Naive thymus-derived CD4-positive, alpha-beta T cell (primary cell): ENCODE measurements at regions of chr6 and their contacts with region 1.

Region 1: GRCh38 chr6:54717849-54718455 is 128.6 kb upstream of the FAM83B start:
- DNase-seq: peak in 6 of 9 donors; percentile 4 to 37 (median 18)
- ATAC-seq: peak; percentile 68
- H3K4me3 ChIP-seq: no peak overlapping the region
- H3K4me3 Mint-ChIP-seq: no peak overlapping the region
- H3K27ac ChIP-seq: no peak overlapping the region
- H3K27ac Mint-ChIP-seq: no peak overlapping the region
- H3K4me1 ChIP-seq: no peaks in the 10 kb centered on the region
- H3K4me1 Mint-ChIP-seq: no peaks in the 10 kb centered on the region
- H3K27me3 ChIP-seq: no peaks in the 10 kb centered on the region
- H3K27me3 Mint-ChIP-seq: no peaks in the 10 kb centered on the region

Region 2: DNA sequence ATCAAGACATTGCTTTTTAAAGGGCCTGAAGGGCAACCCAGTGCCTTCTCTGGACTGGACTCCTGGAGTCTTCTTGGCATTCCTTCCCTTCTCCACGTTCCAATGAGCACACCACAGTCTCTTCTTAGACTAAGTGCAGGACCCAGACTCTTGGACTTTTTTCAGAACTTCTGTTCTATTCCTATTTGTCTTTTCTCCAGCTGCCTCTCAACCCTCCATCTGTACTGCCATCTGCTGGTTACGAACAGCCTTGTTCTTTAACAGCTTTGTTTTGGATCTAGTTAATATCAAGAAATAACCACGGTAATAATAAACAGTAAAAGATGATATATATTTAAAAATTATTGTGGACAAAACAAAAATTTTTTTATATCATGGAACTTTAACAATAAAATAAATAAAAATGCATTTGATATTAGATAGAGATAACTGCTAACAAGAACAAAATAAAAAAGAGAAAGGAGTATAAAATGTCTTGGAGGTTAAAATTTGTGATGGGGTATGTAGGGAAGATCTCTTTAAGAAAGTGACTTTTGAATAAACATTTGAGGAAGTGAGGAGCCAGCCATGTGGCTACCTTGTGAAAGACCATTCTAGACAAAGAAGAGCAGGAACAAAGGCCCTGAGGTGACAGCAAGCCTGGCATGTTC is 351.3 kb after region 1 on chr6:
- CTCF ChIA-PET with region 1: no interaction called
- POLR2A ChIA-PET with region 1: no interaction called
- intact Hi-C with region 1: loop called in 1 of 2 experiments (anchors 2 kb)
- DNase-seq: no peak
- ATAC-seq: no peak
- H3K4me3 ChIP-seq: no peak overlapping the region
- H3K4me3 Mint-ChIP-seq: no peak overlapping the region
- H3K27ac ChIP-seq: no peak overlapping the region
- H3K27ac Mint-ChIP-seq: no peak overlapping the region
- H3K4me1 ChIP-seq: no peaks in the 10 kb centered on the region
- H3K4me1 Mint-ChIP-seq: no peaks in the 10 kb centered on the region
- H3K27me3 ChIP-seq: no peaks in the 10 kb centered on the region
- H3K27me3 Mint-ChIP-seq: no peaks in the 10 kb centered on the region

Region 3: GRCh38 chr6:55239099-55239498 is 521.1 kb after region 1 on chr6:
- CTCF ChIA-PET with region 1: no interaction called
- POLR2A ChIA-PET with region 1: no interaction called
- intact Hi-C with region 1: loop called in 1 of 2 experiments (anchors 2 kb)
- DNase-seq: no peak
- ATAC-seq: no peak
- H3K4me3 ChIP-seq: no peak overlapping the region
- H3K4me3 Mint-ChIP-seq: no peak overlapping the region
- H3K27ac ChIP-seq: no peak overlapping the region
- H3K27ac Mint-ChIP-seq: no peak overlapping the region
- H3K4me1 ChIP-seq: no peaks in the 10 kb centered on the region
- H3K4me1 Mint-ChIP-seq: no peaks in the 10 kb centered on the region
- H3K27me3 ChIP-seq: no peaks in the 10 kb centered on the region
- H3K27me3 Mint-ChIP-seq: no peaks in the 10 kb centered on the region